ENCODE measurements at regions of chr18 and their contacts with region 1.

Region 1: DNA sequence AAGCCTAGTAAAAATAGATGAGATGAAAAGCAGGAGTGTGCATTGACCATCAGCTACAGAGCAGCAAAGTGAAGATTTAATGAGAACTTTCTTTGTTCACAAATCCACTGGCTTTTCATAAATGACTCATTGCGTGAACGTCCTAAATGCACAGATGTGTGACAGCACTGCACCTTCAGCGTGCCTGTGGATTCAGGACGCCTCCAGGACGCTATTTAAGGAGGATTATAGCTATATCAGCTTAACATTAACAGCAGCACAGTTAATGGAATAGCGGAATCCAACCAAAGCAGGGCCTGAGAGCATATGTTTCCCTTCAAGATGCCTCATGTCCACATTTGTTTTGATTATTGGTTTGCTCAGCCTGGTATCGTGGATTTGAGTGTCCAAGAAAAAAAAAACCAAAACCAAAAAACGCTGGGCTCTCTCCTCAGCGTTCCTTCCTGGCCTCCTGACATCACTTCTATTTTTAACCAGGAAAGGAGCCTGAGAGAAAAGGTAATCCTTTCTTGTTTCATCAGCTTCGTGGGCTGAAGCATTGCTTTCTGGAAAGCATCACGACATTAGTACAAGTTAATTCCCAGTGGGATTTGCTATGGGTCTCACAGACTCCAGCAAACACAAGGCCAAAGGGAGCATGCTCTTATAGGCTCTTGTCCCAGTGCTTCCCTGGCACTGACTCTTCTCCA is 447.0 kb upstream of the SMIM21 start:
- DNase-seq: no peak
- ATAC-seq: no peak
- H3K4me3 ChIP-seq: no peak overlapping the region
- H3K27ac ChIP-seq: no peak overlapping the region
- H3K4me1 ChIP-seq: no peaks in the 10 kb centered on the region
- H3K27me3 ChIP-seq: no peaks in the 10 kb centered on the region
- CTCF ChIP-seq: no peak
- EP300 ChIP-seq: no peak
- POLR2A ChIP-seq: no peak
- RAD21 ChIP-seq: no peak

Region 2: GRCh38 chr18:74147779-74148542 is 1726.6 kb before region 1 on chr18 and contains the starts of genes FBXO15 and TIMM21:
- CTCF ChIA-PET with region 1: no interaction called
- POLR2A ChIA-PET with region 1: no interaction called
- in situ Hi-C with region 1: no loop called
- intact Hi-C with region 1: loop called (anchors 10 kb)
- DNase-seq: peak; percentile 83 to 95 (median 84)
- ATAC-seq: peak; percentile 96
- H3K4me3 ChIP-seq: peak within 1 kb of the TSS; percentile 95
- H3K27ac ChIP-seq: peak within 1 kb of the TSS; percentile 100
- H3K4me1 ChIP-seq: peaks cover 5 to 11% of the 10 kb centered on the region in 2 experiments; a peak in 4 of 5 replicates
- H3K27me3 ChIP-seq: no peaks in the 10 kb centered on the region
- CTCF ChIP-seq: no peak
- EP300 ChIP-seq: peak; percentile 20; the same call in 1 of the 2 replicates
- POLR2A ChIP-seq: peak; percentile 81
- RAD21 ChIP-seq: no peak
- polyA plus RNA-seq, gene FBXO15: 0.15 to 0.35 TPM
- polyA plus RNA-seq, gene TIMM21: 187 to 229 TPM

Region 3: DNA sequence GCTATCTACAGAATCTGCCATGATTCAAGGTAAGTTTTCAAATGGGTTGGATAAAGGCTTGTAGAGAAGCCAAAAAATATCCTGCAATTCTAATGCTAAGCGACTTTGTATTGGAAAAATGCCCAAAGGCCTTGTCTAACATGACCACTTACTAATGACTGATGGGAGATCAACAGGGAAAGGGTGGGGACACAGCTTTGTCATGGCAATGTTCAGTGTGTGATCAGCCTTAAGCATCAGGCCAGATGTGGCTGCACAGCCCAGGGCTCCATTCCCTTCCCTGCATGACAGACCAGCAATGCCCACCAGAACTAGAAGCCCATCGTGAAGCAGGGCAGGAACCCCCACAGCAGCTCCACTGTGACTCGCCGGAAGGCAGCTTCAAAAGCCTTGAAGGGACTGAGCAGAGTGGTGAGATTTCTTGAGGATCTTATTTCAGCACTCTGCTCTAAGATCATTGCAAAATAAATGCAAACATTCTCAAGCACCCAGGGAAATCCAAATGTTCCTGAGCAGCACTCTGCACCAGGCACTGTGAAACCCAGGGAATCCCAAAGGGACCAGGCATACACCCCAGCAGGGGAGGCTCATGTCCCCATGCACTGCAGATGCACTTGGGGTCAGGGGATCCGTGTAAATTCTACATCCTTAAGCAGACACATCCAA is 70.9 kb after region 1 on chr18:
- CTCF ChIA-PET with region 1: no interaction called
- POLR2A ChIA-PET with region 1: no interaction called
- in situ Hi-C with region 1: no loop called
- intact Hi-C with region 1: no loop called
- DNase-seq: no peak
- ATAC-seq: no peak
- H3K4me3 ChIP-seq: no peak overlapping the region
- H3K27ac ChIP-seq: no peak overlapping the region
- H3K4me1 ChIP-seq: no peaks in the 10 kb centered on the region
- H3K27me3 ChIP-seq: no peaks in the 10 kb centered on the region
- CTCF ChIP-seq: no peak
- EP300 ChIP-seq: no peak
- POLR2A ChIP-seq: no peak
- RAD21 ChIP-seq: no peak

Measured in K562 (cell line).